Panc1 (cell line): ENCODE measurements at regions of chr7 and their contacts with region 1.

Region 1: DNA sequence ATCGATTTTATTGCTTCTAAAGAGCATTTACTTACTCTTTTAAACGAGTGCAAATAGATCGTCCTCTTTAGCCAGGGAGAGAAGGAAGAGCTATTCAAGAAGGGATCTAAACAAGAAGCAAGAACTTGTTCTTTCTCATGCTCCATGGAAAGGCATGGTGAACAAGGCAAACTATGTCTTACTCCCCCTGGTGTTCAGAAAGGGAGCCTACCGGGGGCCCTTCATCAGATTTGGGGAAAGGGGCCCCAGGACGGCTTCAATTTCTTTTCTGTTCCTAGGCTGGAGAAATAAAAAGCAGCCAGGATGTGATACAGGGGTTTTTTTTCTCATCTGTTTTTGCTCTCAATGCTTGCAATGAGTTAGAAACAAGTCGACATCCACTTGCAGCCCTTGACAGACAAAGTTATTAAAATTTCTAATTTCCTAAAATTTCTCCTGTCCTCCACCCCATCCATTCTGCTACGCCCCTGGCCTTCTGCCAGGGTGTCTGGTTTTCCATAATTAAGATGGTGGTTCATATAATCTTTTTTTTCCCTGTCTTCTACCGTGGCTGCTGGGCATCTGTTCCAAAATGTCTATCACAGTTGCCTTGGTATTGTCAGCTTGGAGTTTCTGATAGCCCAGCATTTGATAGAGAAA is 214.4 kb downstream of the CREB5 start:
- DNase-seq: no peak
- ATAC-seq: peak; percentile 74; the same call in 1 of the 2 replicates
- H3K4me3 ChIP-seq: no peak overlapping the region
- H3K27ac ChIP-seq: no peak overlapping the region
- H3K4me1 ChIP-seq: no peaks in the 10 kb centered on the region
- H3K27me3 ChIP-seq: peaks cover 2% of the 10 kb centered on the region
- CTCF ChIP-seq: peak; percentile 85

Region 2: DNA sequence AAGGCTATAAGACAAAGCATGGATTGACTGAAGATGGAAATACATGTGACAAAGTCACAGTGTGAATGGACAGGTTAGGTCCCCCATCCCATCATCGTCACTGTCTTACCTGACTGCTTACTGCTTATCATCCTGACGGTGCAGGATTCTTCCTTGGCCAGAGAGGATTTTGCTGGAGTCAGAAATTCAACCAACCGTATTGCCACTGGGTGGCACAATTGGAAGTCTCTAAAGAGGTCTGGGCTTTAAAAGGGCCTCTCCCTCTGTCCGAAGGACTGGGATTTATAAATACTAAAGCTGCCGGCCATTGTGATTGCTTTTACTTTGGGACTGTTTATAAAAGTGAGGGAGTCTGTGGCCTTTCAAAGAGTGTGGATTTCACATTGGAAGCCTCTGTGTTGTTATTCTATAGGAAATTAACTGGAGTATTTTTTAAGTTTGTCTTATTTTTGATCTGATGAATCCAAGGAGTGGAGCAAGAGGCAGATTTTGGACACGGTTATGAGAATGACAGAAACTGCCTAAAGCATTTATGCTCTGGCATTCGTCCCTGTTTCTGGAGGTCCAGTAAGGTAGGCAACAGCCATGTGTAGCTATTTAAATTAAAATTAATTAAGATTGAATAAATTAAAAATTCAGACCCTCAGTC is 327.7 kb before region 1 on chr7:
- CTCF ChIA-PET with region 1: no interaction called
- POLR2A ChIA-PET with region 1: no interaction called
- in situ Hi-C with region 1: no loop called
- intact Hi-C with region 1: loop called (anchors 10 kb)
- DNase-seq: peak; percentile 28
- ATAC-seq: peak; percentile 94
- H3K4me3 ChIP-seq: no peak overlapping the region
- H3K27ac ChIP-seq: no peak overlapping the region
- H3K4me1 ChIP-seq: no peaks in the 10 kb centered on the region
- H3K27me3 ChIP-seq: peaks cover 2% of the 10 kb centered on the region; the same call in 1 of the 2 replicates
- CTCF ChIP-seq: peak; percentile 76

Region 3: DNA sequence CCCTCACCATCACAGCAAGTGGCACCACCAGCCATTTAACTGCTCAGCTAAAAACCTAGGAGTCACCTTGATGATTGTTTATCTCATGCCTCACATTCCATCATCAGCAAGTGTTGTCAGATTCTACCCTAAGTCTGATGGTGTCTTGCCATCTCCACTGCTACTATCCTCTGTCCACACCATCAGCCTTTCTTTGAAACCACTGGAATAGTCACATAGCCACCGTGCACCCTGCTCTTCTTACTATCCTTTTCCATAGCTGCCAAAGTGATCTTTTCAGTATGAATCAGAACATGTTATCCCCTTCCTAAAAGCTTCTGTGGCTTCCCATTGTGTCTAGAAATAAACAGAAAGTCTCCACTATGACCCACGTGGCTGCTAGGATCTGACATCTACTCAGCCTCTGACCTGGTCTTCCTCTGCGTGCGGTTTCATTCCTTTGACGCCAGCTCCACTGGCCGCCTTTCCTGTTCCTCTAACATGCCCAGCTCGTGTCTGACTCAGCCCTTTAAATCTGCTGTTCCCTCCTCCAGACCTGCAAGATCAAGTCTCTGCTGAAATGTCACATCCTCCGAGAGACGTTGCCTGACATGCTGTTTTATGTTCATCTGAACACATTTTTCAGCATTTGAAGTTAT is 551.3 kb after region 1 on chr7:
- CTCF ChIA-PET with region 1: no interaction called
- POLR2A ChIA-PET with region 1: no interaction called
- in situ Hi-C with region 1: no loop called
- intact Hi-C with region 1: no loop called
- DNase-seq: no peak
- ATAC-seq: no peak
- H3K4me3 ChIP-seq: no peak overlapping the region
- H3K27ac ChIP-seq: no peak overlapping the region
- H3K4me1 ChIP-seq: no peaks in the 10 kb centered on the region
- H3K27me3 ChIP-seq: peaks cover 13% of the 10 kb centered on the region
- CTCF ChIP-seq: no peak